Activated naive CD4-positive, alpha-beta T cell treated with anti-CD3 and anti-CD28 coated beads for 36 hours (primary cell): ENCODE measurements at regions of chr13 and their contacts with region 1.

Region 1: DNA sequence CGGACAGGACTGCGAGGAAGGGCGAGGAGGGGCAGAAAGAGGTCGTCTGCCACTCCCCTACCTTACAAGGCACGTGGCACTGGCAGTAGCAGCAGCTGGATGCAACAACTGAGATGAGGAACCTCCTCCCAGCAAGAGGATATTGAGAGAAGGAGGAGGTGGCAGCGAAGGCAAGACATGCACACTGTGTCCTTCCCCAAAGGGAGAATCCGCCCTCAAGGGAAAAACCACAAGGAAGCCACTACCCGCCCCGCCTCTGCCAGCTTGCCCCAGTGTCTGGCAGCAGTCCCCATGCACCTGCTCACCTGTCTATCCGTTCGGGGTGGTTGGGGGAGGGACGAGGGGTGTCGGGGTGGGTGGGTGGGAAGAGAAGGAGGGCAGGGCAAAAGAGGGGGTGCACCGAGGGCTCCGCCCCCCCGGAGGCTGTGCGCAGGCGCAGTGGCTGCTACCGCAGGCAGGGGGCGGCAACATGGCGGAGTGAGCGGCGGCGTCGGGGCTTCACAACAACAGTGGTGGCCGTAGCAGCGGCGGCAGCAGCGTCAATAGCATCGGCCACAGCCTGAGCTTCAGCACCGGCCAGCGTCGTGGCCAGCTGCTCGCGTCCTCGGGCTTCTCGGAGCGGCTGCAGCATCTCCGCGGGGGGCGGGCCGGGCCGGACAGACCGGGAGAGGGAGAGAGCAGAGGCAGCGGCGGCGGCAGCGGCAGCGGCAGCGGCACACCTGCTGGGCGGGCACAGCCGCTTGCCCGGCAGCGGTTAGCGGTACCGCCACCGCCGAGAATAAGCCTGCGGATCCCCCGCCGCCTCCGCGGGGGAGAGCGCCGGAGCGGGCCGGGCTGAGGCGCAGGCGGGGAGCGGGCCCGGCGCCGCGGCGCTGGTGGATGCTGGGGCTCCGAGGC is at the start of gene NBEA:
- DNase-seq: peak; percentile 70
- H3K4me3 Mint-ChIP-seq: peak within 1 kb of the TSS; percentile 84
- H3K27ac Mint-ChIP-seq: no peak within 1 kb of the TSS
- H3K4me1 Mint-ChIP-seq: peaks cover 21% of the 10 kb centered on the region
- H3K27me3 Mint-ChIP-seq: peaks cover 40% of the 10 kb centered on the region
- total RNA-seq, gene NBEA: 0.26 to 0.67 TPM

Region 2: DNA sequence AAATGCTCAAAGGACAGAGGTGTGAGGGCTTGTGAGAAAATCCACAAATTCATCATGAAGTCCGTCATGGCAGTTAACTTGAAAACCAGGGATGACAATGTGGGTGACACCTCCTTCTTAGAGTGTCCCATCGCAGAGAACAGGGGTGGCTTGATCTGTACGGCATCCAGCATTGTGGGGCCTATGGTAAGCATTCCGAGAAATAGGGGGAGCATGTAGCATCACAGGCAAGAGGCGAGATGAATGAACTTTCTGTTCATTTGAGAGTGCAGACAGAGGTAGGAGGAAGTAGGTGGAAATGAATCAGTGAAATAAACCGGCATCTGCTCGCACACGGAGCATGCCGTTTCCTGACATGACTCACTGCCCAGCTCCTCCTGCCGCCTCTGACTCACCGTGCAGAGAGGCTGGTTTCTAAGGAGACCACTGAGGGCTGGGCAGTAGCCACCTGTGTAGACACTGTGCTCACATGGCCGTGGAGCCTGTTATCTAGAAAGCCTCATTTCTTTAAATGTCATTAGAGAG is 785.2 kb before region 1 on chr13:
- CTCF ChIA-PET with region 1: no interaction called
- intact Hi-C with region 1: loop called (anchors 2 kb)
- DNase-seq: peak; percentile 68
- H3K4me3 Mint-ChIP-seq: no peak overlapping the region
- H3K27ac Mint-ChIP-seq: no peak overlapping the region
- H3K4me1 Mint-ChIP-seq: peaks cover 8% of the 10 kb centered on the region
- H3K27me3 Mint-ChIP-seq: peaks cover 30% of the 10 kb centered on the region

Region 3: GRCh38 chr13:35164324-35164932 is 222.3 kb after region 1 on chr13:
- CTCF ChIA-PET with region 1: no interaction called
- intact Hi-C with region 1: loop called (anchors 2 kb)
- DNase-seq: no peak
- H3K4me3 Mint-ChIP-seq: no peak overlapping the region
- H3K27ac Mint-ChIP-seq: no peak overlapping the region
- H3K4me1 Mint-ChIP-seq: peaks cover 6% of the 10 kb centered on the region
- H3K27me3 Mint-ChIP-seq: no peaks in the 10 kb centered on the region

Region 4: GRCh38 chr13:35470671-35471661 is 528.9 kb after region 1 on chr13:
- CTCF ChIA-PET with region 1: no interaction called
- intact Hi-C with region 1: loop called (anchors 5 kb)
- DNase-seq: no peak
- H3K4me3 Mint-ChIP-seq: no peak overlapping the region
- H3K27ac Mint-ChIP-seq: no peak overlapping the region
- H3K4me1 Mint-ChIP-seq: peaks cover 17% of the 10 kb centered on the region
- H3K27me3 Mint-ChIP-seq: peaks cover 63% of the 10 kb centered on the region